ENCODE measurements at regions of chr10 and their contacts with region 1.

Region 1: GRCh38 chr10:91816981-91817380 is 18.8 kb downstream of the TNKS2 start:
- DNase-seq: no peak
- H3K4me3 ChIP-seq: no peak overlapping the region
- H3K27ac ChIP-seq: no peak overlapping the region
- H3K4me1 ChIP-seq: no peaks in the 10 kb centered on the region
- H3K27me3 ChIP-seq: no peaks in the 10 kb centered on the region
- CTCF ChIP-seq: no peak

Region 2: DNA sequence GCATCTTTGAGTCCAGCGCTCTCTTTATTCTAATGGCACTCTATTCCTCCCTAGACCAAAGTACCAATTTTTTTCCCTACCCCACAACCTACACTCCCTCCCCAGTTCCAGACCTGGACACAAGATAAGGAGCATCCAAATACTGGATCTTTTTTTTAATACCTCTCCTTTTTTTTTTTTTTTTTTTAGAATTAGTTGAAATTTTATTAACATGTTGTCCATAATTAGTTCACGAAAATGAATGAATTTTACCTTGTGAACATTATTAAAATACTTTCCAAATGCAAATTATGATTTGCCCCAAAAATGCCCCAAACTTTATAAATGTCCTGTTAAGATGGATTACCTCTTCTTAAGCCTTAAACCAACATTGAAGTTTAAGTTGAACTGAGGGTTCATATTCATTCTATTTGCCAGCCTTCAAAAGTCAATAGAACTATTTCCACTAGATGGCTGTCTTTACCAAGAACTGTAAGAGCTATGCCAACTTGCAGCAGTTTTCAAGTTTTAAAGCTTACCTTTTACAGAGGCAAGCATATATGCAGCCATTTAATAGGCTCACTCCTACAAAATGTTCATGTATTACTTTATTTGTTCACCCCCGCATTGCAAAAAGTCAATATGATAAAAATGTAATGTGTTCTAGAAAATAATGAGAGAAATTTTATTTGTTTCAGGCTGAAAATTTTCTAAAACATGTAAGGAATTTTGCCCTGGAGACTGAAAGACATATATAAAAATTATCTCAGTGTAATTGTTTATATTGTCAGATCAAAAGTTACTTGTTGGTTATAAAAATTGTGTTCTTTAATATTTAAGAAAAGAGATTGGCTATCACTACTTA is 58.5 kb before region 1 on chr10:
- CTCF ChIA-PET with region 1: no interaction called
- POLR2A ChIA-PET with region 1: no interaction called
- intact Hi-C with region 1: loop called (anchors 10 kb)
- DNase-seq: peak in 1 of 2 experiments; percentile 60
- H3K4me3 ChIP-seq: no peak overlapping the region
- H3K27ac ChIP-seq: no peak overlapping the region
- H3K4me1 ChIP-seq: peaks cover 9% of the 10 kb centered on the region
- H3K27me3 ChIP-seq: no peaks in the 10 kb centered on the region
- CTCF ChIP-seq: peak; percentile 71

Region 3: GRCh38 chr10:92773776-92774175 is 956.8 kb after region 1 on chr10:
- CTCF ChIA-PET with region 1: no interaction called
- POLR2A ChIA-PET with region 1: interaction called, 10 read pairs
- intact Hi-C with region 1: no loop called
- DNase-seq: no peak
- H3K4me3 ChIP-seq: no peak overlapping the region
- H3K27ac ChIP-seq: no peak overlapping the region
- H3K4me1 ChIP-seq: no peaks in the 10 kb centered on the region
- H3K27me3 ChIP-seq: no peaks in the 10 kb centered on the region
- CTCF ChIP-seq: no peak